Activated CD4-positive, alpha-beta T cell treated with anti-CD3 and anti-CD28 coated beads for 36 hours (primary cell): ENCODE measurements at regions of chr13 and their contacts with region 1.

Region 1: DNA sequence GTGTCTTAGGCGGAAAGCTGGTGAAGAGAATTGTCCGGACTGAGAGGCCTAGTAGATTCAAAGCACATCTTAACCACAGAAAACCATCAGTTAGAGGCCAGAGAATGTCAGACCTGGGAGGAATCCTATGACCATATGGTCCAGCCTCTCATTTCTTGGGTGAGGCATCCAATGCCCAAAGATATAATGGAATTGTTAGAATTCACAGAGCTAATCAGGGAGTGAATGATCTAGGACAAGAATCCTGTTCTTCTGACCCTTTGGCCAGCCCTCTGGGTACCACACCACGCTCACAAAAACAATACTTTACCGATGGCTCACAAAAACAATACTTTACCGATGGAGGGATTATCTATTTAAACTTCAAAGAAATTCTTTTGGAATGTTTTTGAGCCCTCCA is 166.3 kb upstream of the TMTC4 start:
- DNase-seq: no peak
- ATAC-seq: no peak
- H3K4me3 Mint-ChIP-seq: no peak overlapping the region
- H3K27ac Mint-ChIP-seq: no peak overlapping the region
- H3K4me1 Mint-ChIP-seq: no peaks in the 10 kb centered on the region
- H3K27me3 Mint-ChIP-seq: peaks cover 2% of the 10 kb centered on the region

Region 2: GRCh38 chr13:100822871-100823443 is 17.9 kb before region 1 on chr13:
- CTCF ChIA-PET with region 1: interaction called, 4 read pairs
- POLR2A ChIA-PET with region 1: interaction called, 12 read pairs
- intact Hi-C with region 1: no loop called
- DNase-seq: no peak
- ATAC-seq: no peak
- H3K4me3 Mint-ChIP-seq: no peak overlapping the region
- H3K27ac Mint-ChIP-seq: no peak overlapping the region
- H3K4me1 Mint-ChIP-seq: no peaks in the 10 kb centered on the region
- H3K27me3 Mint-ChIP-seq: peaks cover 8% of the 10 kb centered on the region